HCT116 (cell line): ENCODE measurements at regions of chr17 and their contacts with region 1.

Region 1: GRCh38 chr17:64661976-64662773 is at the start of gene SMURF2:
- DNase-seq: no peak
- ATAC-seq: peak; percentile 76
- H3K4me3 ChIP-seq: peak within 1 kb of the TSS; percentile 81 to 82
- H3K27ac ChIP-seq: peak within 1 kb of the TSS; percentile 96
- H3K4me1 ChIP-seq: peaks cover 72 to 83% of the 10 kb centered on the region in 2 experiments
- H3K27me3 ChIP-seq: no peaks in the 10 kb centered on the region
- CTCF ChIP-seq: no peak
- POLR2A ChIP-seq: peak; percentile 89
- RAD21 ChIP-seq: peak; percentile 11; the same call in 1 of the 2 replicates
- total RNA-seq, gene SMURF2: 127 TPM

Region 2: DNA sequence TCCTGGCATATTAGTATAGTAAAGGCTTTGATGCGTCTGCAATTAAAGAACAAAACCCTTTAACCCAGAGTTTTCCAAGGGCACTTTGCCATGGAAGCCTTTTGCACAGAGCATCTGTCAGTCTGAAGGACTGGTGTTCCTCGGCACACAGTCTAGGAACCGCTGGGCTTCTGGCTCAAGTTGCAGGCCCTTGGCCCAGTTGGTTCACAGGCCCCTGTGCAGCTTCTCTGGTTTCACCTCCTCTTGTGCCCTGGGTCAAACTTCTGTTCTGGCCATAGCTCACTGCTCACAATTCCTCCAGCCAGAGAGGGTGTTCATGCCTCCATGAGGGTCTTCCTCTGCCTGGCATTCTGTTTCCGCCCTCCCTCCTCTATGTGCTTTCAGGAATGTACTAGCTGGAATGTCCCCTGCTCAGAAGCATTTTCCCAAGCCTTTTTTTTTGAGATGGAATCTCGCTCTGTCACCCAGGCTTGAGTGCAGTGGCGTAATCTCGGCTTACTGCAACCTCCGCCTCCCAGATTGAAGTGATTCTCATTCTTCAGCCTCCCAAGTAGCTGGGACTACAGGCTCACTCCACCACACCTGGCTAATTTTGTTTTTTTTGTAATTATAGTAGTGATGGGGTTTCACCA is 364.6 kb before region 1 on chr17:
- CTCF ChIA-PET with region 1: no interaction called
- POLR2A ChIA-PET with region 1: no interaction called
- RAD21 ChIA-PET with region 1: no interaction called
- intact Hi-C with region 1: no loop called
- DNase-seq: no peak
- ATAC-seq: no peak
- H3K4me3 ChIP-seq: no peak overlapping the region
- H3K27ac ChIP-seq: no peak overlapping the region
- H3K4me1 ChIP-seq: peaks cover 6 to 7% of the 10 kb centered on the region in 2 experiments
- H3K27me3 ChIP-seq: no peaks in the 10 kb centered on the region
- CTCF ChIP-seq: no peak
- POLR2A ChIP-seq: no peak
- RAD21 ChIP-seq: no peak

Region 3: DNA sequence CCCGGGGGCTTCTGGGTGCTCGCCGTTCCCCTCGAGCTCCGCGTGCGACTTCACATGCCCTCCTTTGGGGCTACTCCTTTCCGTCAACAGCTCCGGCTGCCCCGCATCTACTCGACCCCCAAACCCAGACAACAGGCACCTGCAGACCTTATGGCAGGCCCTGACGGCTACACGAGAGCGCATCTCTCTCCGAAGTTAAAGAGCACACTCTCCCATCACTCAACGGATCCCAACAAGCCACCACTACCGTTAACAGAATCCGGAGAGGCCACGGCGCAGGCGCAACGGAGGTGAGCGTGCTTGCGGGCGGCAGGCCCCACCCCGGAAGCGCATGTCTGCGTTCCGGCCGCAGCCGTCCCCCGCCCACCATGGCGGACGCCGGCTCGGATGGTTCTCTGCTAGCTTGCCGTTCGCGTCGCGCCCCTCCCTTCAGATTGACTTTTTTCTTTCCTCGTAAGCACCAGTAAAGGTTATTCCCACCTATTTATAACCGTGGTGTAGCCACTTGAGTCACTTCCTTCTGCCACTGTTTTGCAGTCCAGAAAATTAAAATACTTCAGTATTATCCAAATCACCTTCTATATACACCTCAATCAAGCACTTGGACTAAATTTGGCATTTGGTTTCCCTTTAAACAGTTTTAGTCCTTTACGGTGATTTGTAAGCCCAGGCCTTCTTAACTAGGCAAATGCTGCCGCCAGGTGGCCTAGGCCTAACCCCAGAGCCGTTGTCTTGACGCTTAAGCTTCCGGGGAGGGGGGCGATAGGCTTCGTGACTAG is 165.2 kb before region 1 on chr17 and contains the start of gene POLG2:
- CTCF ChIA-PET with region 1: no interaction called
- POLR2A ChIA-PET with region 1: no interaction called
- RAD21 ChIA-PET with region 1: no interaction called
- intact Hi-C with region 1: loop called (anchors 5 kb)
- DNase-seq: peak; percentile 87
- ATAC-seq: peak; percentile 88
- H3K4me3 ChIP-seq: peak within 1 kb of the TSS; percentile 73 to 78
- H3K27ac ChIP-seq: peak within 1 kb of the TSS; percentile 79
- H3K4me1 ChIP-seq: peaks cover 10 to 52% of the 10 kb centered on the region in 2 experiments; a peak in 3 of 4 replicates
- H3K27me3 ChIP-seq: no peaks in the 10 kb centered on the region
- CTCF ChIP-seq: peak; percentile 69 to 81 (median 72); a peak in 5 of 6 replicates
- POLR2A ChIP-seq: peak; percentile 96
- RAD21 ChIP-seq: peak; percentile 75
- total RNA-seq, gene POLG2: 51.5 TPM

Region 4: GRCh38 chr17:64622931-64623654 is 39.1 kb before region 1 on chr17:
- CTCF ChIA-PET with region 1: no interaction called
- POLR2A ChIA-PET with region 1: no interaction called
- RAD21 ChIA-PET with region 1: no interaction called
- intact Hi-C with region 1: no loop called
- DNase-seq: peak; percentile 80
- ATAC-seq: peak; percentile 84
- H3K4me3 ChIP-seq: peak overlapping the region in 1 of 2 experiments; percentile 6; a peak in 2 of 4 replicates
- H3K27ac ChIP-seq: peak overlapping the region; percentile 48; the same call in 1 of the 2 replicates
- H3K4me1 ChIP-seq: peaks cover 33 to 60% of the 10 kb centered on the region in 2 experiments
- H3K27me3 ChIP-seq: no peaks in the 10 kb centered on the region
- CTCF ChIP-seq: 0 out of 6 replicates have a peak, but pooled peaks of 1 of the 3 experiments have one; percentile 6
- POLR2A ChIP-seq: no peak
- RAD21 ChIP-seq: peak; percentile 32

Region 5: DNA sequence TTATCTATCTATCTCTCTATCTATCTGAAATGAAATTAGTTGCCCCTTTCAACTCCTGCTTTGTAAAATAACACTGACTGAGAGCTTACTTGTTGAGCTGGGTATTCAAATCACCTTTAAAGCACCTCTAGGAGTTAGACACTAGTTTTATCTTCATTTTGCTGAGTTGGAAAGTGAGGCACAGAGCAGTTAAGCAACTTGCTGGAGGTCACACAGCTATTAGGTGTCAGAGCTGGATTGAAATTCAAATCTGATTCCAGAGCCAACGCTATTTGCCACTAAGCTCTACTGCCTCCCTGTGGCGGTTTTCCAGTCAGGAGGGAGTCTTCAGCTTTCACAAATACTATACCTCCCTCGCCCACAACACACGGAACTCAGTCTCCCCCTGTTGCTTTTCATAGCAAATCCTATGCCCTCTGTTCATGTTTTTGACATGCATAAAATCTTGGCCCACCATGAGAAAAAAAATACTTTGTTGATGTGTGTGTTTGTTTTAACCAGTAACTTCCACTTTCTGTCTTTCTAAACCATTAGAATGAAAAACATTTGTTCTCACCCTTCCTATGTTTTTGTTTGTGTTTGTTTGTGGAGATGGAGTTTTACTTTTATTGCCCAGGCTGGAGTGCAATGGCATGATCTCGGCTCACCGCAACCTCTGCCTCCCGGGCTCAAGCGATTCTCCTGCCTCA is 74.8 kb after region 1 on chr17:
- CTCF ChIA-PET with region 1: no interaction called
- POLR2A ChIA-PET with region 1: interaction called, 3 read pairs
- RAD21 ChIA-PET with region 1: no interaction called
- intact Hi-C with region 1: loop called (anchors 2 kb)
- DNase-seq: peak; percentile 61
- ATAC-seq: peak; percentile 75
- H3K4me3 ChIP-seq: no peak overlapping the region
- H3K27ac ChIP-seq: no peak overlapping the region
- H3K4me1 ChIP-seq: peaks cover 33 to 63% of the 10 kb centered on the region in 2 experiments; a peak in 3 of 4 replicates
- H3K27me3 ChIP-seq: no peaks in the 10 kb centered on the region
- CTCF ChIP-seq: peak; percentile 82 to 96 (median 91); a peak in 5 of 6 replicates
- POLR2A ChIP-seq: no peak
- RAD21 ChIP-seq: peak; percentile 99